ENCODE measurements at regions of chr2 and their contacts with region 1.

Region 1: DNA sequence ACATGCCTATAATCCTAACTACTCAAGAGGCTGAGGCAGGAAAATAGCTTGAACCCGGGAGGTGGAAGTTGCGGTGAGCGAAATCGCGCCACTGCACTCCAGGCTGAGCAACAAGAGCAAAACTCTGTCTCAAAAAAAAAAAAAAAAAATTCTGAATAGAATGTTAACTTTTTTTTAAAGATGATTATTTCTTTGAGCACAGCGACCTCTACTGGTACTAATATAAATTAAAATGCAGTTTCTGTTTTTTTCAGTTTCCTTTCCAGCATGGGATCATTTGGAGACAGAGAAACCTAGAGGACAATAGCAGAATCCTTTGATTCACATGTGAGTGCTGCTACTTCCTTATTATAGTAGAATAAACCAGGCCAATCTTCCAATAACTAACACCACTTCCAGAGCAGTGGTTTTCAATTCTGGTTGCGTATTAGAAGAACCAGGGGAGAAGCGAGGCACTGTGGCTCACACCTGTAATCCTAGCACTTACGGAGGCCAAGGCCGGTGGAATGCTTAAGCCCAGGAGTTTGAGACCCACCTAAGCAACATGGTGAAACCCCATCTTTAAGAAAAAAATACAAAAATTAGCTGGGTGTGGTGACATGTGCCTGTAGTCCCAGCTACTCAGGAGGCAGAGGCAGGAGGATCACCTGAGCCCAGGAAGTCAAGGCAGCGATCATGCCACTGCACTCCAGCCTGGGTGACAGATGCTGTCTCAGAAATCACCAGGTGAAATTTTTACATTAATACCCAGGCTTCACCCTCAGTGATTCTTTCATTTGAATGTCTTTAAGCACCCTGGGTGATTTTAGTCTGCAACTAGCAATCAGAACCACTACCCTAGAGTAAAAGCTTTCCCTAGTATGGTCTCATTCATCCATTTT is 10.1 kb downstream of the SRSF7 start:
- DNase-seq: no peak
- CTCF ChIP-seq: peak; percentile 6

Region 2: GRCh38 chr2:38315707-38316333 is 425.3 kb before region 1 on chr2:
- in situ Hi-C with region 1: loop called (anchors 25 kb)
- DNase-seq: peak; percentile 59
- CTCF ChIP-seq: peak; percentile 53

Region 3: GRCh38 chr2:38581193-38582147 is 159.6 kb before region 1 on chr2:
- in situ Hi-C with region 1: loop called (anchors 10 kb)
- DNase-seq: peak; percentile 34
- CTCF ChIP-seq: peak; percentile 55